Mammary epithelial cell (primary cell): ENCODE measurements at regions of chr5 and their contacts with region 1.

Region 1: DNA sequence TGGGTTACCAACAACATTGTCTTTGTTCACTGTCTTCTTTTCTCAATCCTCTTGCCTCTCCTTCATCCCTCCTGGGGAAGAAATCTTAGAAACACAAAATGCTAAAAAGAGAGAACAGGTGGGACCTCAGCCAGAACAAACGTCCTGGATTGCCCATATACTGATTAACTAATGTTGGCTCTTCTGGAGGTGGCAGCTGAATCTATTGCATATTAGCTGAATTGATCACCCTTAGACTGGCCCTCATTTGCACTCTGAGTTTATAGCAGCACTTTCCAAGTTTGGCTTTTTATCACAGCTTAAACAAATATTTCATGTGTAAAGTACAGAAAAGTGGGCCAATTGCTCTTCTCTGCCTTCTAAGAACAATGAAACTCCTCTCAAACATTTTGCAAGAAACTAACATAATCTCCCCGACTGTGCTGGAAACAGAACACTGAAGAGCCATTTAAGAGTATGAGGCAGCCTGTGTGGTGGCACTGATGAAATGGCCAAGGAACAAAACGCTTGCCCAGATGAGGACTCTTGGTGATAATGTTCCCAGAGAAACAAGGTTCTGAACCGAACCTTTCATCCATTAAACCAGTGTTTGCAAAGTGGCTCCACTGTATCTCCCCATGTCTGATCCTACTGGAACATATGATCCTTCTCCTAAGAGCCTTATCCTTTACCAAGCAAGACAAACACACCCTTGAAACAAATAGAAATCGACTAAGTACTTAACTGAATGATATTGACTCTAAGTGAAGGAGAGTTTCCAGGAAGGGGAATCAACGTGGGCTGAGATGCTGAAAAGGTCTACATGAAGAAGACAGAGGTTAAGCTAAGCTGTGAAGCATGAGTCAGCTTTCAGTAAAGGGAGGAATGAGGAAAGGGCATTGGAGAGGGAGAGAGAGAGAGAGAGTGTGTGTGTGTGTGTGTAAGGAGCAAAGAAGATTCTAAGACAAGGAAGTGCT is 83.2 kb upstream of the LIFR start:
- DNase-seq: no peak
- H3K4me3 ChIP-seq: no peak overlapping the region
- H3K27ac ChIP-seq: no peak overlapping the region
- H3K4me1 ChIP-seq: no peaks in the 10 kb centered on the region
- H3K27me3 ChIP-seq: peaks cover 4% of the 10 kb centered on the region
- CTCF ChIP-seq: no peak

Region 2: GRCh38 chr5:38765399-38765861 is 125.8 kb after region 1 on chr5:
- CTCF ChIA-PET with region 1: no interaction called
- dilution Hi-C with region 1: loop called (anchors 10 kb)
- in situ Hi-C with region 1: no loop called
- intact Hi-C with region 1: no loop called
- DNase-seq: no peak
- H3K4me3 ChIP-seq: no peak overlapping the region
- H3K27ac ChIP-seq: no peak overlapping the region
- H3K4me1 ChIP-seq: no peaks in the 10 kb centered on the region
- H3K27me3 ChIP-seq: no peaks in the 10 kb centered on the region
- CTCF ChIP-seq: no peak